Posterior cingulate gyrus (tissue), 11 donors: ENCODE measurements at regions of chr6 and their contacts with region 1.

Region 1: GRCh38 chr6:108782179-108783041 is 65.8 kb upstream of the ARMC2 start:
- DNase-seq: peak; percentile 55 to 97 (median 80)

Region 2: DNA sequence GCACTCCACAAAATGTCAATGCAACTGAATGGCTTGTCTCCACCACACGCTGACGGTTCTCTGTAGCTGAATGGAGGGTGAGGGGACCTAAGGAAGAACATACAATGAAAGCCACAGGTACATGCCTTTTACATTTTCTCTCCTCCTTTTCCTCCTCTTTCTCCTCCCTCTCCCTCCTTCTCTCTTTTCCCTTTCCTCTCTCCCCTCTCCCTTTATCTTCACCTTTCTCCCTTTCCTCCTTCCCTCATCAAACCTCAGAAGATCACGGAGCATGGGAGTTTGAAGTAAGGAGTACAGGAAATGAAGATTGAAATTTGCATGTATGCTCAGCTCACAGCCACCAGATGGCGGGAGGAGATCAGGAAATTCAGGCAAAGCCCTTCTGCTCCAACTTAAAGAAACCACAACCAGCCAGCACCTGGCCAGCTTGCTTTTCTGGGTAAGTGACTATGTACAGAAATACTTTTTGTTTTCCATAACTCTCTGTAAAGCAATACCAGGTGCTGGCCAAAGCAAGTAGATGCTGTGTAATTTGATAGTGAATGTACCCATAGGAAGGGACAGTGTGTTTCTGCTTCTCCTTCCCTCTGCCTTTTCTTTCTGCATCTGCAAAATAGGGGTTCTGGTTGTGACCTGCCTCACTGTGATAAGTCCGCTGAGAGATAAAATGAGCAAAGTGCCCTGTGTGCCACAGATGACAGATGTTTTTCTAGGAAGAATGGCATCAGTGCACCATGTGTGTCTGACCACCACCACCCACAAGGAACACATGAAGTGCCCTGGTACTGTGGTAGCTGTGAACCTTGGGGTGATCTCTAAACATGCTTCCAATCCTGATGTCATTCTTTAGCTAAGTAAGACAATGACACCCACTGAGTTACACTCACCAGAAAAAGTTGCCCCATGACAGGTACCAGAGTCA is 240.3 kb before region 1 on chr6:
- intact Hi-C with region 1: loop called (anchors 1 kb)
- DNase-seq: peak; percentile 38 to 95 (median 68)

Region 3: GRCh38 chr6:108558372-108559096 is 223.9 kb before region 1 on chr6:
- intact Hi-C with region 1: loop called (anchors 2 kb)
- DNase-seq: peak; percentile 96 to 100 (median 98)

Region 4: GRCh38 chr6:108835218-108835850 is 52.9 kb after region 1 on chr6:
- intact Hi-C with region 1: loop called (anchors 5 kb)
- DNase-seq: peak; percentile 73 to 98 (median 90)

Region 5: DNA sequence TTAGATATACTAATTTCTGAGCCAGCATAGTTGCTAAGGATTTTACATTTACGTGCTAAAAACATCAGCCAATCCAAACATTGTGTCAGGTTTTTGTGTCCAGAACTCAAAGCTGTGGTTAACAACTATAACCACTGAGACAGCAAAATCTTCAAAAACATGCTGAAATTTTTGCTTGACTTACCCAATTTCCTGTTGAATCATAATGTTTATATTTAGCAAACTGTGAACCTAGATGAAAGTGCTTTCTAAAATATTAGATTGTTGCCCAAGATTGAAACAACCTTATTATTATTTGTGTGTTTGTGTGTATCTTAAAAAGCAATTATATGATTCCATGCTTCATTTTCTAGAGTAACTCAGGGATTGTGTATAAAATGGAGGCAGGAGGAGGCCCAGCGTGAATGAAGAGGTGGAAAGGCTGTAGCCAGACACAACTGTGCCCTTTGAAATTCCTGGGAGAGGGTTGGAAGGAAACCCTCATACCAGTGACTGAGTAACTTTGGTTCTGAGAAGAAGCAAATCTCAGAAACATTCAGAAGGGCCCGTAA is 113.8 kb after region 1 on chr6:
- intact Hi-C with region 1: loop called (anchors 10 kb)
- DNase-seq: no peak